ENCODE measurements at regions of chr22 and their contacts with region 1.

Region 1: DNA sequence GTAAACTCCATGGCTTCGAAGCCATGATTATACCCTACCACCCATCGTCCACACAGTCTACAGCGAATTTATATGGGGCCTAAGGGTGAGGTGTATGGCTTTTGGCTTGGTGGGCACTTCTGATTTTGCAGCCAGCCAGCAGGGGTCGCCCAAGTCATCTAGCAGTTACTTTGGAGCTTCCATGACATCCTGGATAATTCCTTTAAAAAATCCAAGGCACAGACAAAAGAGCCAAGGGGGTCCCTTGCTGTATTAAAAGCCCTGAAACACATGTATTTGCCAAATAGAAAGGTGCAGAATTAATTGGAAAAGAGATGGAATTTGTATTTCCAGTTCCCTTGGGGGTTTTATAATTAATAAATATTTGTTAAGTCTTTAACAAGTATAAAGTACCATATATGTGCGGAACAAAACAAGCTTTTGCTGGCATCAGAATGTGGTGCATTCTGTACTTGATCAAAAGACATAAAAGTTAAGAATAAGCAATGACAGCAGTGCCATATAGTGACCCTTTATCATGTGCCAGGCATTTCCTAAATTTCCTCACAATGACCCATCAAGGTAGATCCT is 132.8 kb upstream of the PITPNB start:
- DNase-seq: peak; percentile 59
- H3K4me3 ChIP-seq: no peak overlapping the region
- H3K27ac ChIP-seq: no peak overlapping the region
- H3K27me3 ChIP-seq: no peaks in the 10 kb centered on the region
- CTCF ChIP-seq: peak; percentile 97

Region 2: DNA sequence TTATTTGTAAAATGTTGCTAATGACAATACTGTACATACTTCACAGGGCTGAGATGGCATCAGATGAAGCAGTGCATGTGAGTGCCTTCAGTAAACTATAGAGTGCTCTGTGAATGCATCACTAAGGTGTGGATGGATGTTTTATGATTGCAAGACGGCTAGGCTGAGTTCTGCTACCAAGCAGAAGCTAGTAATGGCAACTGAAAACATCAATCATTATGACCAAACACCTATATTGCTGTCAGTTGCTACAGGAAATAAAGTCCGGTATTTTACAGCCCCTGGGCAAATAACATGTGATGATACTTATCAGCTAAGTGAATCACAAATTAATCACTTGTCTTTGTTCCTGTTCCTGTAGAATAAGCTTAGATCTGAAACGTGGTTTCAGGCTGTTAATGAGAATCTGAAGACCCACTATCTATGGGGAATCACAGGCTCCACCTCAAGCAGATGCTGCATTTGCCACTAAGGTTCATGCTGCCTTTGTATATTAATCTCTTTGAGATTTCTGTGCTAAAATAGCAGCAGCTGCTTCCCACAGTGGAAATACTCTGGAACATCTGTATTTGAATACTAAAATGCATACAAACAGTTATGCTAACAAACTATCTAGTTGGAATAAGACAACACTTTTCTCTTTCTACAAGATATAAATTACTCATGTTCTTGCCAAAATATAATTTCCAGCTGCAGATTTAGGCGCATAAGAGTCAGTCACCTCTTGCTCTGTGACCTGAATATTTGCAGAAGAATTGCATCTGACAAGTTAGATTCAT is 121.2 kb after region 1 on chr22:
- in situ Hi-C with region 1: no loop called
- DNase-seq: no peak
- H3K4me3 ChIP-seq: no peak overlapping the region
- H3K27ac ChIP-seq: no peak overlapping the region
- H3K27me3 ChIP-seq: no peaks in the 10 kb centered on the region
- CTCF ChIP-seq: no peak

Region 3: GRCh38 chr22:28594797-28595462 is 543.1 kb after region 1 on chr22:
- in situ Hi-C with region 1: loop called (anchors 25 kb)
- DNase-seq: peak; percentile 9
- H3K4me3 ChIP-seq: no peak overlapping the region
- H3K27ac ChIP-seq: no peak overlapping the region
- H3K27me3 ChIP-seq: no peaks in the 10 kb centered on the region
- CTCF ChIP-seq: peak; percentile 36